CD4-positive, alpha-beta memory T cell (primary cell): ENCODE measurements at regions of chr1 and their contacts with region 1.

Region 1: GRCh38 chr1:24909388-24909898 is 20.6 kb downstream of the RUNX3 start:
- DNase-seq: peak in 1 of 5 donors; percentile 37
- H3K4me3 ChIP-seq: no peak overlapping the region
- H3K4me3 Mint-ChIP-seq: peak overlapping the region in 2 of 8 donors; percentile 26 to 52
- H3K27ac ChIP-seq: peak overlapping the region; percentile 77
- H3K27ac Mint-ChIP-seq: peak overlapping the region; percentile 85 to 100 (median 95)
- H3K4me1 ChIP-seq: peaks cover 68% of the 10 kb centered on the region
- H3K4me1 Mint-ChIP-seq: peaks cover 35 to 72% (median 51%) of the 10 kb centered on the region in 4 donors
- H3K27me3 ChIP-seq: no peaks in the 10 kb centered on the region
- H3K27me3 Mint-ChIP-seq: no peaks in the 10 kb centered on the region

Region 2: GRCh38 chr1:24619376-24619775 is 290.1 kb before region 1 on chr1:
- CTCF ChIA-PET with region 1: no interaction called
- POLR2A ChIA-PET with region 1: no interaction called
- intact Hi-C with region 1: no loop called
- DNase-seq: no peak
- H3K4me3 ChIP-seq: no peak overlapping the region
- H3K4me3 Mint-ChIP-seq: no peak overlapping the region
- H3K27ac ChIP-seq: no peak overlapping the region
- H3K27ac Mint-ChIP-seq: no peak overlapping the region
- H3K4me1 ChIP-seq: no peaks in the 10 kb centered on the region
- H3K4me1 Mint-ChIP-seq: no peaks in the 10 kb centered on the region
- H3K27me3 ChIP-seq: no peaks in the 10 kb centered on the region
- H3K27me3 Mint-ChIP-seq: peaks cover 8 to 20% of the 10 kb centered on the region in 2 donors

Region 3: GRCh38 chr1:24897767-24898483 is 11.5 kb before region 1 on chr1:
- CTCF ChIA-PET with region 1: interaction called, 17 read pairs
- POLR2A ChIA-PET with region 1: interaction called, 20 read pairs
- intact Hi-C with region 1: no loop called
- DNase-seq: peak in 2 of 5 donors; percentile 36 to 49
- H3K4me3 ChIP-seq: no peak overlapping the region
- H3K4me3 Mint-ChIP-seq: peak overlapping the region in 1 of 8 donors; percentile 5
- H3K27ac ChIP-seq: no peak overlapping the region
- H3K27ac Mint-ChIP-seq: peak overlapping the region; percentile 29 to 85 (median 75)
- H3K4me1 ChIP-seq: peaks cover 18% of the 10 kb centered on the region
- H3K4me1 Mint-ChIP-seq: peaks cover 14 to 46% (median 31%) of the 10 kb centered on the region in 4 donors
- H3K27me3 ChIP-seq: no peaks in the 10 kb centered on the region
- H3K27me3 Mint-ChIP-seq: no peaks in the 10 kb centered on the region

Region 4: GRCh38 chr1:24925082-24925779 is 15.8 kb after region 1 on chr1:
- CTCF ChIA-PET with region 1: interaction called, 39 read pairs
- POLR2A ChIA-PET with region 1: interaction called, 335 read pairs
- intact Hi-C with region 1: loop called (anchors 1 kb)
- DNase-seq: peak; percentile 84 to 98 (median 88)
- H3K4me3 ChIP-seq: peak overlapping the region; percentile 74 to 81
- H3K4me3 Mint-ChIP-seq: peak overlapping the region; percentile 87 to 98 (median 97)
- H3K27ac ChIP-seq: peak overlapping the region; percentile 98
- H3K27ac Mint-ChIP-seq: peak overlapping the region; percentile 99 to 100 (median 100)
- H3K4me1 ChIP-seq: peaks cover 81% of the 10 kb centered on the region
- H3K4me1 Mint-ChIP-seq: peaks cover 40 to 89% (median 66%) of the 10 kb centered on the region in 4 donors
- H3K27me3 ChIP-seq: no peaks in the 10 kb centered on the region
- H3K27me3 Mint-ChIP-seq: no peaks in the 10 kb centered on the region